Activated CD4-positive, alpha-beta memory T cell treated with anti-CD3 and anti-CD28 coated beads for 36 hours (primary cell): ENCODE measurements at regions of chr5 and their contacts with region 1.

Region 1: DNA sequence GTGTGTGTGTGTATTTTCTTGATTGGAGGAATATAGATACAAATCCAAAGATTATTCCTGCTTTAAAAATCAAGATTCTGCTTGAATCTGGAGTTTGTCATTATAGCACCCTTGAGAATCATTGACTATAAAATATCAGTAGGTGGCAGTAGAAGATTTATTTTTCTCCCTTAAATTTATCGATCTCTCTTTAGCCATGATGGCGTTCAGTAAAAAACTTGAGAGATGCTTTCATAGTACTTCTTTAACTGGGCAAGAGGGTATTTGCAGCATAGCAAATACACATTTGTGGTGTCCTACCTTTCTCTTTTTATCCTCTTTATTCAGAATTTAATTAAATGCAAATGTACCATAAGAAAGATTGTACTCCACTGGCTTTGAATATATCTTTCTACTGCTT is 307.7 kb downstream of the ADGRV1 start:
- DNase-seq: no peak
- H3K4me3 Mint-ChIP-seq: no peak overlapping the region
- H3K27ac Mint-ChIP-seq: no peak overlapping the region
- H3K4me1 Mint-ChIP-seq: peaks cover 6% of the 10 kb centered on the region
- H3K27me3 Mint-ChIP-seq: peaks cover 14% of the 10 kb centered on the region

Region 2: DNA sequence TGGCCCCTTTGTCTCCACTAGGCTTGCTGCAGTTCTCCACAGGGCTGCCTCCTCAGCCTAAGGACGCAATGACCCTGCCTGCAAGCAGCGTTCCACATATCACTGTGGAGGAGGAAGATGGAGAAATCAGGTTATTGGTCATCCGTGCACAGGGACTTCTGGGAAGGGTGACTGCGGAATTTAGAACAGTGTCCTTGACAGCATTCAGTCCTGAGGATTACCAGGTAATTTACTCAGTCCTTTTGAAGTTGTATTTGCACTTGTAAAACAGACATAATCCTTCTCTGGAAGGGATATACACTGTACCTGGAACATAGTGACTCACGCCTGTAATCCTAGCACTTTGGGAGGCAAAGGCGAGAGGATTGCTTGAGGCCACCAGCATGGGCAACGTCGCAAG is 191.1 kb before region 1 on chr5:
- CTCF ChIA-PET with region 1: no interaction called
- POLR2A ChIA-PET with region 1: no interaction called
- intact Hi-C with region 1: no loop called
- DNase-seq: no peak
- H3K4me3 Mint-ChIP-seq: no peak overlapping the region
- H3K27ac Mint-ChIP-seq: no peak overlapping the region
- H3K4me1 Mint-ChIP-seq: no peaks in the 10 kb centered on the region
- H3K27me3 Mint-ChIP-seq: no peaks in the 10 kb centered on the region

Region 3: DNA sequence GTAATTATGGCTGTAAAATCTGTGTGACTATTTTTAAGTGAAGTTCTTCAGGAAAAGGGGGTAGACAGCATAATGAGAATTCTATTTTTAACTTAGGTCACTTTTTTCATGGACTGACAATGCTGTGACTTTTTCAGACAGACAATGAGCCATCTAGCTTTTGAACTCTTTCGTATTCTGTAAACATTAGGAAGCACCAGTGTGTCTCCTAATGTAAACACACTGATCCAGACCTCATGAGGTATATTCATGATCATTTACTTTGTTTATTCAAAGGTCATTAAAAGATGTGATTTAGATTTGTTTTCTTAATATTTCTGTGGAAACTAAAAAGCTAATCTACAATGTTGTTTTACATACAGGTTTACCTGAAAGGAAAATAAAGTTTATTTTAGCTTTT is 44.8 kb after region 1 on chr5:
- CTCF ChIA-PET with region 1: no interaction called
- POLR2A ChIA-PET with region 1: no interaction called
- intact Hi-C with region 1: no loop called
- DNase-seq: no peak
- H3K4me3 Mint-ChIP-seq: no peak overlapping the region
- H3K27ac Mint-ChIP-seq: no peak overlapping the region
- H3K4me1 Mint-ChIP-seq: no peaks in the 10 kb centered on the region
- H3K27me3 Mint-ChIP-seq: peaks cover 7% of the 10 kb centered on the region

Region 4: DNA sequence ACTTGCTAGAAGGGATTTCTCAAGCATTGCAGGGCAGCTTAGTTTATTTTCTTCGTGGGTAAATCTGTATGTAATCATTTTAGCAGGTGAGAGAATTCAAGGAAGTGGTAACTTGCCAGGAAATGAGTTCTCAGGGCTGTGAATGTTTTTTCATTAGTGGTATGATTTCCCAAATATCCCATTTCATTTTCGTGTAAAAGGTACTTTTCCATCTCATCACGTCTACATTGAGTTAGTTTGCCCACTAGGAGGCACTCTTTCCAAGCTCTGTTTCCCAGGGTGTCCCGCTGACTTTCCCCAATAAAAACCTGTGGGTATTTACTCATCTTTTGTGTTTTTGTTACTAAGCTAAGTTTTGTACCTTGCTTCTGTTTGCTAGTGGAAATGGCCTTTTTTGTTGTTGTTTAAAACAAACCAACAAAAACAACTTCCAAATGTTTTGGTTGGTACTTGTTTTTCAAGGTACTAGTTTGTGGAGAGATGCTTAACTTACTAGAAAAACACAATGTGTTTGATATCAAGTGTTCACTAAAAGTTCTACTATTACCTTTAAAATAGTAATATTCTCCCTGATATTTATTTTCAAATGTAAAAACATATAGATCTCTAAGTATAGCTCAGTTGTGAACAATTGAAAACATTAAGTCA is 65.8 kb after region 1 on chr5:
- CTCF ChIA-PET with region 1: interaction called, 12 read pairs
- POLR2A ChIA-PET with region 1: no interaction called
- intact Hi-C with region 1: no loop called
- DNase-seq: peak; percentile 37
- H3K4me3 Mint-ChIP-seq: no peak overlapping the region
- H3K27ac Mint-ChIP-seq: no peak overlapping the region
- H3K4me1 Mint-ChIP-seq: no peaks in the 10 kb centered on the region
- H3K27me3 Mint-ChIP-seq: peaks cover 10% of the 10 kb centered on the region

Region 5: DNA sequence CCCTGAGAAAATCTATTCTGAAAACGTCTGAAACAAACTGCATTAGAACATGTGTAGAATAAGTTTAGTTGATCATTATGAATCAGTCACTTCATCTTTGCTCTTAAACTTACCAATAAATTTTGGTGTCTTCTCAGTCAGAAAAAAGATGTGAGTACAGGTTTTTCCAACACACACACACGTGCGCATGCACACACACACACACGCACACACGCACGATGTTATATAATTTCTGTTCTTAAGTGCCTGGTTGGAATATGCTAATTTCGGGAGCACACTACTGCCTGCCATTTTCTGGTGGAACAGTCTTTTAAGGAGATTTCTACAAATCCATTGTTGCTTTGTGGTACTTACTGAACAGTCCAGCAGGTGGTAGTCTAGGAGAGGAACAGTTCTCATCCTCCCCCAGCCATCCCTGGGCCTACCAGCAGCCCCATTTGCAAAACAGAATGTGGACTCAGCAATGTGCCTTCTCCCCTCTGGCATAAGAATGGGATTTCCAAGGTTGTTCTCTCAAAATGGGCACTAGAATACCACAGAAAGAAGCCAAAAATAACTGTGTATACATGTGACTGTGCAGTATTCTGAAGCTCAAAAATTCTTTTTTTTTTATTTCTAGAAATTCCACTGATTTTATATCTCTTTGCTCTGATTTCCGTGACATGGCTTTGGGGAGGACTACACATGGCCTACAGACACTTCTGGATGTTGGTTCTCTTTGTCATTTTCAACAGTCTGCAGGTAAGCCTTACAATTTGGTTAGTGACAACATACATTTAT is 235.5 kb after region 1 on chr5:
- CTCF ChIA-PET with region 1: interaction called, 4 read pairs
- POLR2A ChIA-PET with region 1: no interaction called
- intact Hi-C with region 1: loop called (anchors 2 kb)
- DNase-seq: peak; percentile 61
- H3K4me3 Mint-ChIP-seq: no peak overlapping the region
- H3K27ac Mint-ChIP-seq: no peak overlapping the region
- H3K4me1 Mint-ChIP-seq: no peaks in the 10 kb centered on the region
- H3K27me3 Mint-ChIP-seq: peaks cover 2% of the 10 kb centered on the region

Region 6: GRCh38 chr5:91225848-91226686 is 359.7 kb after region 1 on chr5:
- CTCF ChIA-PET with region 1: interaction called, 4 read pairs
- POLR2A ChIA-PET with region 1: no interaction called
- intact Hi-C with region 1: loop called (anchors 2 kb)
- DNase-seq: peak; percentile 73
- H3K4me3 Mint-ChIP-seq: no peak overlapping the region
- H3K27ac Mint-ChIP-seq: peak overlapping the region; percentile 13
- H3K4me1 Mint-ChIP-seq: peaks cover 4% of the 10 kb centered on the region
- H3K27me3 Mint-ChIP-seq: peaks cover 7% of the 10 kb centered on the region